ENCODE measurements at regions of chr10 and their contacts with region 1.

Region 1: DNA sequence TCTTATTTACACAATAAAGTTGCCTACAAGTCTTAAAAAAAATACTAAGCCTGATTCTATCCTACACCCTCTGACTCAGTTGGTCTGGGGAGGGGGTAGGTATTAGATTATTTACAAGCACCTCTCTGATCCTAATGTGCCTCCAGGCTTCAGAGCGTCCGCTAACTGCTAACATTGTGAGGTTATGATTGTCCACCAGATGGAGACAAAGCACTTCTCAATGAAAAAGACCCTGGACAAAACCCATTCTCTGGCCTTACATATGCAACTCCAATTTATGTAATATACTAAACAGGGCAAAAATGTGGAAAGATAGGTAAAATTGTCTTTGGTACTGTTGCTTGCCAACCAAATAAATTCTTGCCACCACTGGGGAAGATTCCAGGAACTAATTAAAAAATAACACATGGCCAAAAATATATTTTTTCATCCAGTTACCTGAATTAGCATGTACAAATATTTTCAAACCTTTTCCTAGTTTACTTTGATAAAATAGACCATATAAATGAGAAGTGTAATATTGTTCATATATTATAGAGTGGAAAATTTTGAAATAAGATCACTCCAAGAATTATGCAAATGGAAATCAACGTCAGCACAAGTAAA is 92.4 kb downstream of the KIF20B start:
- DNase-seq: peak in 1 of 2 experiments; percentile 70
- H3K4me3 ChIP-seq: no peak overlapping the region
- H3K4me3 Mint-ChIP-seq: no peak overlapping the region
- H3K27ac Mint-ChIP-seq: no peak overlapping the region
- H3K4me1 ChIP-seq: no peaks in the 10 kb centered on the region
- H3K4me1 Mint-ChIP-seq: no peaks in the 10 kb centered on the region
- H3K27me3 ChIP-seq: no peaks in the 10 kb centered on the region
- H3K27me3 Mint-ChIP-seq: no peaks in the 10 kb centered on the region
- CTCF ChIP-seq: peak; percentile 82 to 87

Region 2: DNA sequence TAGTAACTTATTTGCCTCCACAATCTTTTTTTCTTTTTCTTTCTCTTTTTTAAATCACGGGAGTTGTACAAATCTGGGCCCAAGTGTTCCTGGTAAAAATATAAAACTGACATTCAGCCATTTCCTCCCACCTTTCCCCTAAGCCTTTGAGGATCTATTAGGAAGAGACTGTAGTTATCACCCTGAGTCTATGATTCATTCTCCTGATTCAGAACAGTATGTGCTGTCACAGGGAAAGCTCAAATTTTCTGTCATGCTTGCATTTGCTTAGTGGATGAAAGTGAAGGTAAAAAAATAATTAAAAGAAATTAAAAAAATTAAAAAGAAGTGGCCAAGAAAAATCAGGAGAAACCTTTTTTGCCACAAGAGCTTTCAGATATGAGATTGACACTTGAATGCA is 20.7 kb before region 1 on chr10:
- CTCF ChIA-PET with region 1: no interaction called
- POLR2A ChIA-PET with region 1: no interaction called
- intact Hi-C with region 1: no loop called
- DNase-seq: no peak
- H3K4me3 ChIP-seq: no peak overlapping the region
- H3K4me3 Mint-ChIP-seq: no peak overlapping the region
- H3K27ac Mint-ChIP-seq: no peak overlapping the region
- H3K4me1 ChIP-seq: no peaks in the 10 kb centered on the region
- H3K4me1 Mint-ChIP-seq: no peaks in the 10 kb centered on the region
- H3K27me3 ChIP-seq: no peaks in the 10 kb centered on the region
- H3K27me3 Mint-ChIP-seq: no peaks in the 10 kb centered on the region
- CTCF ChIP-seq: no peak

Region 3: GRCh38 chr10:89887830-89888229 is 94.1 kb after region 1 on chr10:
- CTCF ChIA-PET with region 1: no interaction called
- POLR2A ChIA-PET with region 1: no interaction called
- intact Hi-C with region 1: loop called (anchors 1 kb)
- DNase-seq: no peak
- H3K4me3 ChIP-seq: no peak overlapping the region
- H3K4me3 Mint-ChIP-seq: no peak overlapping the region
- H3K27ac Mint-ChIP-seq: no peak overlapping the region
- H3K4me1 ChIP-seq: no peaks in the 10 kb centered on the region
- H3K4me1 Mint-ChIP-seq: no peaks in the 10 kb centered on the region
- H3K27me3 ChIP-seq: no peaks in the 10 kb centered on the region
- H3K27me3 Mint-ChIP-seq: peaks cover 1% of the 10 kb centered on the region
- CTCF ChIP-seq: no peak

Region 4: DNA sequence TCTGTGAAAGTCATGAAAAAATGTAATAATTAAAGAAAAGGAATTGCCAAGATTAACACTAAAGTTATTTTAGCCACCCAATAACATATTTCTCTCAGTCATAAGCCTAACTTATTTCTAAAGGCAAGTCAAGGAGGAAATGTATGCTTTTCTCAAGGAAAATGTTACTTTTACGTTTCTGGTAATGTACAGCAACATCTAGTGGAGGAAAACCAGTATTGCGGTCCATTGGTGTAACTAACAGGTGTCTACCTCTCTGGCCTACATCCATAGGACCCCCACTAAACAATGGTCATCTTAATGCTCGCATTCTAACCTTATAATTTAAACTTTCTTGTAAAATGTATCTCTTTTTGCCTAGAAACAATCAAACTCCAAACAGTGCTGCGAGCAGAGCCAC is 345.1 kb after region 1 on chr10:
- CTCF ChIA-PET with region 1: no interaction called
- POLR2A ChIA-PET with region 1: no interaction called
- intact Hi-C with region 1: loop called (anchors 1 kb)
- DNase-seq: no peak
- H3K4me3 ChIP-seq: no peak overlapping the region
- H3K4me3 Mint-ChIP-seq: no peak overlapping the region
- H3K27ac Mint-ChIP-seq: no peak overlapping the region
- H3K4me1 ChIP-seq: no peaks in the 10 kb centered on the region
- H3K4me1 Mint-ChIP-seq: no peaks in the 10 kb centered on the region
- H3K27me3 ChIP-seq: no peaks in the 10 kb centered on the region
- H3K27me3 Mint-ChIP-seq: peaks cover 12% of the 10 kb centered on the region
- CTCF ChIP-seq: peak in 1 of 2 experiments; percentile 4

Region 5: GRCh38 chr10:90592638-90593302 is 799.0 kb after region 1 on chr10:
- CTCF ChIA-PET with region 1: no interaction called
- POLR2A ChIA-PET with region 1: no interaction called
- intact Hi-C with region 1: loop called (anchors 1 kb)
- DNase-seq: peak; percentile 58 to 62
- H3K4me3 ChIP-seq: no peak overlapping the region
- H3K4me3 Mint-ChIP-seq: no peak overlapping the region
- H3K27ac Mint-ChIP-seq: no peak overlapping the region
- H3K4me1 ChIP-seq: peaks cover under 1% of the 10 kb centered on the region; the same call in 1 of the 2 replicates
- H3K4me1 Mint-ChIP-seq: peaks cover 11% of the 10 kb centered on the region
- H3K27me3 ChIP-seq: no peaks in the 10 kb centered on the region
- H3K27me3 Mint-ChIP-seq: peaks cover 14% of the 10 kb centered on the region
- CTCF ChIP-seq: peak; percentile 58 to 74

Region 6: DNA sequence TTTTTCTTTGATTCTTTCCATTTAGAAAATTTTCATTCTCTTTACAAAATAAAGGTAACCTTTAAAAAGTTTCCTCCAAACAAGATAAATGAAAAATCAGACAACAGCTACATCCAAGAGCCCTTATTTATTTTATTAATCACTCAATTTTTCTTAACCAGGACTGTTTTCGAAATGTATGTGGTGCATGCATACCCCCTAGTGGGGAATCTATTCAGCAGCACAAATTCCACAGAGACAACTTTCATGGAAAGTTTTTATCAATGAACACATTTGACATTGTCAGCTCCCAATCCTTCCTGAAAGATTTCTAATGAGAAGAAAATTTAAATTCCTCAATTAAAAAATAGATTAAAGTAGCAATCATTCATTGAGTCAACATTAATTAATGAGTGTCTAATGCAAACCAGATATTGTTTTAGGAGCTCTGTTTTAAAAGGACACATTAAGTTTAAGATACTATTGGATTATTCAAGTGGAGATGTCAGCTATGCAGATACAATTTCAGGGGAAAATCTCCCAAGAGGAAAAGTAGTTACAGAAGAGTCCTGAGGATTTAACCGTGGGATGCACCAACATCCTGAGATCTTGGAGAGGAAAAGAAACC is 1069.3 kb after region 1 on chr10:
- CTCF ChIA-PET with region 1: no interaction called
- POLR2A ChIA-PET with region 1: no interaction called
- intact Hi-C with region 1: loop called (anchors 1 kb)
- DNase-seq: peak in 1 of 2 experiments; percentile 33
- H3K4me3 ChIP-seq: no peak overlapping the region
- H3K4me3 Mint-ChIP-seq: no peak overlapping the region
- H3K27ac Mint-ChIP-seq: no peak overlapping the region
- H3K4me1 ChIP-seq: no peaks in the 10 kb centered on the region
- H3K4me1 Mint-ChIP-seq: no peaks in the 10 kb centered on the region
- H3K27me3 ChIP-seq: no peaks in the 10 kb centered on the region
- H3K27me3 Mint-ChIP-seq: peaks cover 18% of the 10 kb centered on the region
- CTCF ChIP-seq: peak; percentile 78 to 80